Adrenal gland (tissue), 19 donors: ENCODE measurements at regions of chr16 and their contacts with region 1.

Region 1: GRCh38 chr16:13940397-13940933 is 20.5 kb downstream of the ERCC4 start:
- DNase-seq: no peak
- H3K4me3 ChIP-seq: no peak overlapping the region
- H3K27ac ChIP-seq: peak overlapping the region in 1 of 5 donors; percentile 3
- H3K4me1 ChIP-seq: peaks cover 4 to 23% of the 10 kb centered on the region in 2 donors
- H3K27me3 ChIP-seq: no peaks in the 10 kb centered on the region
- CTCF ChIP-seq: no peak
- POLR2A ChIP-seq: no peak

Region 2: DNA sequence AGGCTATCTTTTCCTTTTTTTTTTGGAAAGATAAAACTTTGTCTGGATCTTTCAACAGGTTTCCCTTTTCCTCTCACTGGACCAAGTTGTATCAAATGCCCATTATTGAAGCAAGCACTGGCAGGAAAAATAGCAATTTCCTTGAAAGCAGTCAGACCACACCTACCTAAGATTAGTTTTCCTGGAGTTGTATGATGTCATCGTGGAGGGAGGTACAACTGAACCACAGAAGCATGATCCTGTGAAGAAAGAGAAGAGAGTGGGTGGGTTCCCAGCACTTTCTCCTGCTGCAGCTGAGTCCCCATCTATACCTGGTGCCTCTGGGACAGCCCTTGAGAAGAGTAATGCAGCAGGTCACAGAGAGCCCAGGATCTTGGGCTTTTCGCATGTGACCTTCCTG is 84.1 kb before region 1 on chr16:
- intact Hi-C with region 1: no loop called
- DNase-seq: no peak
- H3K4me3 ChIP-seq: no peak overlapping the region
- H3K27ac ChIP-seq: no peak overlapping the region
- H3K4me1 ChIP-seq: no peaks in the 10 kb centered on the region
- H3K27me3 ChIP-seq: no peaks in the 10 kb centered on the region
- CTCF ChIP-seq: no peak
- POLR2A ChIP-seq: no peak

Region 3: GRCh38 chr16:14069818-14070217 is 129.4 kb after region 1 on chr16:
- intact Hi-C with region 1: loop called in 1 of 2 experiments (anchors 10 kb)
- DNase-seq: no peak
- H3K4me3 ChIP-seq: no peak overlapping the region
- H3K27ac ChIP-seq: no peak overlapping the region
- H3K4me1 ChIP-seq: peaks cover 7 to 23% of the 10 kb centered on the region in 2 donors
- H3K27me3 ChIP-seq: no peaks in the 10 kb centered on the region
- CTCF ChIP-seq: no peak
- POLR2A ChIP-seq: no peak